ENCODE measurements at regions of chr11 and their contacts with region 1.

Region 1: GRCh38 chr11:82867495-82868082 is 32.6 kb downstream of the PRCP start:
- DNase-seq: peak; percentile 91
- H3K4me3 Mint-ChIP-seq: peak overlapping the region; percentile 15
- H3K27ac Mint-ChIP-seq: peak overlapping the region; percentile 31
- H3K4me1 Mint-ChIP-seq: peaks cover 9% of the 10 kb centered on the region
- H3K27me3 Mint-ChIP-seq: no peaks in the 10 kb centered on the region

Region 2: DNA sequence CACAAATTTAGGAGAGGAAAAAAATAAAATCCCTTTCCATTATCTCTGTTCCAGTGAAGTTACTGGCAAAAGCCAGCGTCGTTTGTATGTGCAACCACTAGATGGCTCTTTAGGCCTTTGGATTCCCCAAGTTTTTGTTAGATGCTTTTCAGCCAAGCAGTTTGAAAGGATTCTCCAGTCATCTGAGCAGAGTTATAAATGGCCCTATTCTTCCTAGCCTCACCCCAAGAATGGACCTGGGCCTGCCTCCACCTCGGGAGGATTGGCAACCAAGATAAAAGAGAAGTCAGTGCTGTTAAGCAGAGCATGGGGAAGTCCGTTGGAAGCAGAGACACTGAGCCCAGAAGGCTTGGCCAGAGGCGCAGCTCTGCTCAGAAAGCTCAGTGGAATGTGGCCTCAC is 149.3 kb before region 1 on chr11:
- CTCF ChIA-PET with region 1: interaction called, 29 read pairs
- intact Hi-C with region 1: loop called (anchors 1 kb)
- DNase-seq: peak; percentile 44
- H3K4me3 Mint-ChIP-seq: no peak overlapping the region
- H3K27ac Mint-ChIP-seq: no peak overlapping the region
- H3K4me1 Mint-ChIP-seq: peaks cover 4% of the 10 kb centered on the region
- H3K27me3 Mint-ChIP-seq: no peaks in the 10 kb centered on the region

Region 3: GRCh38 chr11:82775736-82776346 is 91.7 kb before region 1 on chr11:
- CTCF ChIA-PET with region 1: interaction called, 6 read pairs
- intact Hi-C with region 1: loop called (anchors 1 kb)
- DNase-seq: peak; percentile 68
- H3K4me3 Mint-ChIP-seq: no peak overlapping the region
- H3K27ac Mint-ChIP-seq: no peak overlapping the region
- H3K4me1 Mint-ChIP-seq: no peaks in the 10 kb centered on the region
- H3K27me3 Mint-ChIP-seq: no peaks in the 10 kb centered on the region

Region 4: GRCh38 chr11:82900277-82901164 is 32.9 kb after region 1 on chr11 and contains the start of gene PRCP:
- CTCF ChIA-PET with region 1: interaction called, 57 read pairs
- intact Hi-C with region 1: loop called (anchors 1 kb)
- DNase-seq: peak; percentile 97
- H3K4me3 Mint-ChIP-seq: peak within 1 kb of the TSS; percentile 99
- H3K27ac Mint-ChIP-seq: peak within 1 kb of the TSS; percentile 99
- H3K4me1 Mint-ChIP-seq: peaks cover 48% of the 10 kb centered on the region
- H3K27me3 Mint-ChIP-seq: no peaks in the 10 kb centered on the region
- total RNA-seq, gene PRCP: 23.0 to 23.3 TPM

Region 5: GRCh38 chr11:83222499-83222898 is 354.9 kb after region 1 on chr11:
- CTCF ChIA-PET with region 1: interaction called, 10 read pairs
- intact Hi-C with region 1: no loop called
- DNase-seq: no peak
- H3K4me3 Mint-ChIP-seq: no peak overlapping the region
- H3K27ac Mint-ChIP-seq: no peak overlapping the region
- H3K4me1 Mint-ChIP-seq: no peaks in the 10 kb centered on the region
- H3K27me3 Mint-ChIP-seq: no peaks in the 10 kb centered on the region

Region 6: GRCh38 chr11:83292709-83293456 is 425.3 kb after region 1 on chr11:
- CTCF ChIA-PET with region 1: interaction called, 12 read pairs
- intact Hi-C with region 1: no loop called
- DNase-seq: peak; percentile 57
- H3K4me3 Mint-ChIP-seq: peak overlapping the region; percentile 58
- H3K27ac Mint-ChIP-seq: no peak overlapping the region
- H3K4me1 Mint-ChIP-seq: peaks cover 11% of the 10 kb centered on the region
- H3K27me3 Mint-ChIP-seq: peaks cover 2% of the 10 kb centered on the region

Region 7: GRCh38 chr11:83349296-83349695 is 481.7 kb after region 1 on chr11:
- CTCF ChIA-PET with region 1: no interaction called
- intact Hi-C with region 1: no loop called
- DNase-seq: no peak
- H3K4me3 Mint-ChIP-seq: no peak overlapping the region
- H3K27ac Mint-ChIP-seq: no peak overlapping the region
- H3K4me1 Mint-ChIP-seq: no peaks in the 10 kb centered on the region
- H3K27me3 Mint-ChIP-seq: no peaks in the 10 kb centered on the region

Region 8: DNA sequence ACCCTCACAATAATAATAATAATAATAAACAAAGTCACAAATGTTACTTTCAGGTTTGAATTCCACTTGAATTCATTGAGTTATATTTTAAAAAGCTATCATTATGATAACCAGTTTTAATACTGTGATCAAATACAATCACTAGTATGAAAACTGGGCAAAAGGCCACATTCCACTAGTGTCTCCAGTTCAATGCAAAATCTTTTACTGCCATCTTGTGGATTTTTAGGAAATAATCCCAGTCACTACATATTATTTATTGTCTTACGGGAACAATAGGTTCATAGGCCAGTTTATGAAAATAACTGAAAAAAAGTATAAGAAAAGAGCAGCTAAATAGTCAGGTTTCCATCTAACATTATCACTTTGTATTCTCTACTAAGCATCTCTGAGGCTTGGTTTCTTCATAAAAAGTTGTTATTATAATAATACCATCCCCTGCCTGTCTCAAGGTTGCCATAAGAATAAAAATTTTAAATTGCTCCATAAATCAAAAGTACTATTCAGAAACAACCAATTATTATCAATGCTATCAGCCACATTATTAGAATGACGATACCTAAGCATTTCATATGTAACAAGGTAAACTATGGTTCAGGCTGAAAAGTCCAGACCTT is 952.5 kb after region 1 on chr11:
- CTCF ChIA-PET with region 1: interaction called, 4 read pairs
- intact Hi-C with region 1: loop called (anchors 1 kb)
- DNase-seq: no peak
- H3K4me3 Mint-ChIP-seq: no peak overlapping the region
- H3K27ac Mint-ChIP-seq: no peak overlapping the region
- H3K4me1 Mint-ChIP-seq: no peaks in the 10 kb centered on the region
- H3K27me3 Mint-ChIP-seq: no peaks in the 10 kb centered on the region

Measured in activated naive CD4-positive, alpha-beta T cell treated with anti-CD3 and anti-CD28 coated beads for 36 hours (primary cell).